ENCODE measurements at regions of chr18 and their contacts with region 1.

Region 1: GRCh38 chr18:36354989-36355388 is 57.5 kb downstream of the FHOD3 start:
- DNase-seq: peak; percentile 71
- H3K4me3 ChIP-seq: no peak overlapping the region
- H3K27ac ChIP-seq: no peak overlapping the region
- H3K4me1 ChIP-seq: peaks cover 19% of the 10 kb centered on the region
- H3K27me3 ChIP-seq: no peaks in the 10 kb centered on the region
- CTCF ChIP-seq: no peak

Region 2: DNA sequence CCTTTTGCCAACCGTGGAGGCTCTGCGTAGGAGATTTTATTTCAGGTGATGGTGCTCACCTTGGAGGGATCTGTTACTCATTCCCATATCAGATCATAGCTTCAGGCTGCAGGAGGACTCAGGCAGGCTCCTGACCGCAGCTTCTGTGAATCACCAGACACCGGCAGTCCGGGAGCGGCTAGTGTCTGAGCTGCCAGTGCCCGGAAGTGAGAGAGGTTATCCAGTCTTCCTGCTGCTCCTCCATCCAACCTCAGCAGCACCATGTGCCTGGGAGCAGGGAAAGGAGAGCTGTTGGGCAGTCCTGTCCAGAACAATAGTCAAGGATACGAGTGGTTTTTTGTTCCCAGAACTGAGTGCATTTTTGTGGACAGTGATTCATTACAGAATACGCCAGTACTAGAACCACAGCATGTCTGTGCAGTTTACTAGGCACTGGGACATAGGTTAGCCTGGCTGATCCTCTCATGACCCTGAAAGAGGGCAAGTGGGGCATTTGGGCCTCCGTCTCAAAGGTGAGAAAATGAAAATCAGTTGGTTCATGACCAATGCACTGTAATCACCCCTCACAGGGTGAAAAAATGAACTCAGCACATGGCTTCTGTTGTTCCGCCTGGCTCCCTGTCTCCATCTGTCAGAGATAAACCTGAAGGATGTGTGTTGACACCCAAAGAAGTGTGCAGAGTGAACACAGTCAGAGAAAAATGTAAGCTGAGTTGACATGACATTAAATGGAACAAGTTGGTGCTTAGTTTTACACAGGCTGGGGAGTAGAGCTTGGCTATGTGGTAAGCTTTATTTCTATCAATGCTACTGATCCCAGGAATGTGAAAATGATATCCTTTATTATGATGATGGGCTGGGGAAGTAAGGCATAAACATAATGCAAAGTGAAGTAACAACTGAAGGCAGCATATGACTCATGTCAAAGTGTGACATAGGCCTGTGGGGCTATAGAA is 45.3 kb before region 1 on chr18:
- CTCF ChIA-PET with region 1: no interaction called
- dilution Hi-C with region 1: no loop called
- in situ Hi-C with region 1: no loop called
- intact Hi-C with region 1: loop called (anchors 5 kb)
- DNase-seq: peak; percentile 100
- H3K4me3 ChIP-seq: peak overlapping the region in 2 of 3 experiments; percentile 22 to 24
- H3K27ac ChIP-seq: peak overlapping the region; percentile 89
- H3K4me1 ChIP-seq: peaks cover 71% of the 10 kb centered on the region
- H3K27me3 ChIP-seq: no peaks in the 10 kb centered on the region
- CTCF ChIP-seq: no peak

Region 3: GRCh38 chr18:36711813-36712444 is 356.9 kb after region 1 on chr18:
- CTCF ChIA-PET with region 1: no interaction called
- dilution Hi-C with region 1: no loop called
- in situ Hi-C with region 1: no loop called
- intact Hi-C with region 1: no loop called
- DNase-seq: peak; percentile 74
- H3K4me3 ChIP-seq: no peak overlapping the region
- H3K27ac ChIP-seq: no peak overlapping the region
- H3K4me1 ChIP-seq: peaks cover 7% of the 10 kb centered on the region
- H3K27me3 ChIP-seq: no peaks in the 10 kb centered on the region
- CTCF ChIP-seq: no peak

Measured in mammary epithelial cell (primary cell).